OCI-LY7 (cell line): ENCODE measurements at regions of chr6 and their contacts with region 1.

Region 1: DNA sequence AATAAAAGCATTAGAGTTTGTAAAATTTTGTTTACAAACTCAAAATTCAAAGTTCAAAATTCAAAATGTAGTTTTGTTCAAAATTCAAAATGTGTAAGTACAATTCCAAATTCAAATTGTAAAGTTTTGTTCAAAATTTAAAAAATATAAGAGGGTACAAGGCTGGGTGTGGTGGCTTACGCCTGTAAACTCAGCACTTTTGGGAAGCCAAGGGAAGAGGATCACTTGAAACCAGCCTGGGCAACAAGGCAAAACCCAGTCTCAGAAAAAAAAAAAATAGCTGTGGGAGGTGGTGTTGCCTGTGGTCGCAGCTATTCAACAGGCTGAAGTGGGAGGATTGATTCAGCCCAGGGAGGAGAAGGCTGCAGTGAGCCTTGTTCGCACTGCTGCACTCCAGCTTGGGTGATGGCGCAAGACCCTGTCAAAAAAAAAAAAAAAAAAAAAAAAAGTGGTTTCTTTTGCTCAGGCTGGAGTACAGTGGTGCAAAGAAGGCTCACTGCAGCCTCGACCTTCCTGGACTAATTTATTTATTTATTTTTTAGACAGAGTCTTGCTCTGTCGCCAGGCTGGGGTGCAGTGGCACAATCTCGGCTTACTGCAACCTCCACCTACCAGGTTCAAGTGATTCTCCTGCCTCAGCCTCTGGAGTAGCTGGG is 5.4 kb upstream of the ZBTB12 start:
- DNase-seq: no peak
- H3K4me3 ChIP-seq: no peak overlapping the region
- H3K27ac ChIP-seq: no peak overlapping the region
- H3K4me1 ChIP-seq: peaks cover 11% of the 10 kb centered on the region
- CTCF ChIP-seq: no peak

Region 2: DNA sequence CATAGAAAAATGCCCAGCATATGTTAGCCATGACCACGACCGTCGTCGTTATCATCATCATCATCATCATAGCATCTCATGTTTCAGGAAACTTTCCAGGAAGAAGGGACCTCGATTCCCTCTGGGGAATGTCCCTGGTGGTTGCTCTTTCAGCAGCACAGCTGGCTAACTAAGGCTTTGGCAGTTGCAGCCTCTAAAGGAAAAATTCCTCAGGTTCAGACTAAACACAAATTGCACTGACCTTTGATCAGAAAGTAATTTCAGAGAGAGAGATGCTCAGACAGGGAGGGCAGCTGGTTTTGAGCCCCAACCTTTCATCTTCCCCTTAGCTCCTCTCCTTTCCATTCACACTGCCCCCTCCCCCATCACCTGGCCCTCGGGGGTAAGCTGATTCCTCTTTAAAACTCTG is 33.0 kb after region 1 on chr6:
- CTCF ChIA-PET with region 1: interaction called, 10 read pairs
- POLR2A ChIA-PET with region 1: interaction called, 4 read pairs
- intact Hi-C with region 1: no loop called
- DNase-seq: no peak
- H3K4me3 ChIP-seq: no peak overlapping the region
- H3K27ac ChIP-seq: no peak overlapping the region
- H3K4me1 ChIP-seq: no peaks in the 10 kb centered on the region
- CTCF ChIP-seq: no peak